ENCODE measurements at regions of chr5 and their contacts with region 1.

Region 1: GRCh38 chr5:112691758-112692157 is 45.9 kb upstream of the APC start:
- DNase-seq: no peak

Region 2: DNA sequence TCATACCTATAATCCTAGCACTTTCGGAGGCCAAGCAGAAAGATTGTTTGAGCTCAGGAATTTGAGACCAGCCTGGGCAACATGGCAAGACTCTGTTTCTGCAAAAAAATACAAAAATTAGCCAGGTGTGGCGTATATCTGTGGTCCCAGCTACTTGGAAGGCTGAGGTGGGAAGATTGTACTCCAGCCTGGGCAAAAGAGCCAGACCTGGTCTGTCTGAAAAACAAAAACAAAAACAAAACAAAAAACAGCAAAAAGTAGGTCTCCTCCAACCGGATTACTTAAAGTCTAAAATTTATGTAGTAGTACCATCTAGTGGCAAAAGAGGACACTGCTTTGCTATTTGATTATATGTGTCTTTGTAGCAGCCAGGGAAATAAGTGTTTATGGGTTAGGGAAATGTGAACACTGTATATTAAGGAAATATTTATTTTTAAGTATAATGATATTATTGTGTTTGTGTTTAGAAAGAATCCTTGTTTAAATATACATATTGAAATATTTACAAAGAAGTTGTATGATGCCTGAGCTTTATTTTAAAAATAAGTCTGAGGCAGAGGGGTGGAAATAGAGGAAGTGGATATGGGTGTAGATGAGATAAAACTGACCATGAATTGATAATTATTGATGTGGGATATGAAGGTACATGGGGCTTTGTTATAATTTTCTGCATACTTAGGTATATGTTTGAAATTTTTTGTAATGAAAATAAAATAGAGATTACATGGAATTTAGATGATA is 65.9 kb after region 1 on chr5:
- intact Hi-C with region 1: loop called (anchors 5 kb)
- DNase-seq: no peak

Measured in cardiac septum (tissue), 1 donor.